ENCODE measurements at regions of chr9 and their contacts with region 1.

Region 1: GRCh38 chr9:130707225-130707976 is 13.8 kb downstream of the EXOSC2 start:
- DNase-seq: peak; percentile 33 to 68
- ATAC-seq: peak; percentile 80 to 85
- H3K4me3 ChIP-seq: no peak overlapping the region
- H3K27ac ChIP-seq: no peak overlapping the region
- H3K4me1 ChIP-seq: peaks cover 11% of the 10 kb centered on the region; the same call in 1 of the 3 replicates
- CTCF ChIP-seq: peak; percentile 95
- EP300 ChIP-seq: no peak
- POLR2A ChIP-seq: no peak
- RAD21 ChIP-seq: peak; percentile 76

Region 2: GRCh38 chr9:130607640-130608420 is 99.6 kb before region 1 on chr9:
- CTCF ChIA-PET with region 1: no interaction called
- POLR2A ChIA-PET with region 1: no interaction called
- DNase-seq: no peak
- ATAC-seq: no peak
- H3K4me3 ChIP-seq: no peak overlapping the region
- H3K27ac ChIP-seq: no peak overlapping the region
- H3K4me1 ChIP-seq: no peaks in the 10 kb centered on the region
- CTCF ChIP-seq: no peak
- EP300 ChIP-seq: no peak
- POLR2A ChIP-seq: no peak
- RAD21 ChIP-seq: no peak

Region 3: DNA sequence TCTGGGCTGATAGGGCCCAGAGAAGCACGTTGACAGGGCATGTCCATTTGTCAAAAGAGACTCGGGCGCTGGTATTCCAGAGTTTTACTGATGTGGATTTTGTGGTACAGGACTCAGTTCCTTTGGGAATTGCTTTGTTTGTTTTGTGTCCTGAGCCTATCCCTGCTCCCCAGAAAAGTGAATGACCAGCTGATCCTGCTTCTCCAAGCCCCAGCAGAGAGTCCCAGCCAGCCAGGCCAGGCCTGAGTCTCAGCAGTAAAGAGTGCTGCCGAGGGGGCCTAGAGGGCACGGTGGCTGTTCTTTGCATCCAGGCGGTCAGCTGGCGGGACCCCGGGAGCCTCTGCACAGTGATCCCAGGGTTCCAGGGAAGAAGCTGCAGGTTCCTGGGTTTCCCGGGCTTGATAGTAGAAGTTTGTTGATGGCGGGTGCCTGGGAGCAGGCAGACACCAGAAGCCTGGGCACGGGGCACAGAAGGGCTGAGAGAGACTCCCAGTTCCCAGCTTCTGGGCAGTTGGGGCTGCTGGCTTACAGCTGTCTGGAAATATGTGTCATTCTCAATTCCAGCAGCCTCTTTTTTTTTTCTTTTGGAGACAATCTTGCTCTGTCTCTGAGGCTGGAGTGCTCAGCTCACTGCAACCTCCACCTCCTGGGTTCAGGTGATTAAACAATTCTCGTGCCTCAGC is 34.3 kb before region 1 on chr9:
- CTCF ChIA-PET with region 1: no interaction called
- POLR2A ChIA-PET with region 1: no interaction called
- DNase-seq: no peak
- ATAC-seq: no peak
- H3K4me3 ChIP-seq: no peak overlapping the region
- H3K27ac ChIP-seq: peak overlapping the region in 1 of 2 experiments; percentile 3; a peak in 1 of 6 replicates
- H3K4me1 ChIP-seq: no peaks in the 10 kb centered on the region
- CTCF ChIP-seq: no peak
- EP300 ChIP-seq: no peak
- POLR2A ChIP-seq: no peak
- RAD21 ChIP-seq: no peak

Region 4: DNA sequence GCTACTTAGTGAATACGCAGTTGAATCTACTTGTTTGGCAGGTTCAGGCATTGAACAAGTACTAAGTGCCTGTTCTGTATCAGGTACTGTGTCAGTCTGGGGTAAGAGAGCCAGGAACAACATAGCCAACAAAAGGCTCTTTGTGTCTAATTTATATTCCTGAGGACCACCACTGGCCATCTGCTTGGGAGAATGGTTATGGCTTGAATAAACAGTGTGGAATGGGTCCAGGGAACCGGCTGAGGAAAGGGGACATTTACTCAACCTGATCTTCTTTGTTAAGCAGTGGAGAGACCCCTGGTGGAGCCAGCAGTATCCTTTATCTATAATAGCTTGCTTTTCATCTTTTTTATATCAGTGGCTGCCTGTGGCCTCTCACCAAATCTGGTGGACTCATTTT is 24.7 kb after region 1 on chr9:
- CTCF ChIA-PET with region 1: interaction called, 21 read pairs
- POLR2A ChIA-PET with region 1: no interaction called
- DNase-seq: peak in 1 of 2 experiments; percentile 40
- ATAC-seq: peak; percentile 66 to 80; a peak in 5 of 6 replicates
- H3K4me3 ChIP-seq: no peak overlapping the region
- H3K27ac ChIP-seq: peak overlapping the region; percentile 41 to 53; a peak in 1 of 6 replicates
- H3K4me1 ChIP-seq: peaks cover 25% of the 10 kb centered on the region
- CTCF ChIP-seq: peak; percentile 36; the same call in 2 of the 3 replicates
- EP300 ChIP-seq: no peak
- POLR2A ChIP-seq: no peak
- RAD21 ChIP-seq: 0 out of 5 replicates have a peak, but pooled peaks of 1 of the 2 experiments have one; percentile 11

Region 5: GRCh38 chr9:130847327-130848217 is 140.2 kb after region 1 on chr9:
- CTCF ChIA-PET with region 1: interaction called, 63 read pairs
- POLR2A ChIA-PET with region 1: interaction called, 3 read pairs
- DNase-seq: peak; percentile 87 to 90
- ATAC-seq: peak; percentile 79 to 81
- H3K4me3 ChIP-seq: peak overlapping the region; percentile 35; the same call in 2 of the 3 replicates
- H3K27ac ChIP-seq: peak overlapping the region; percentile 91 to 93
- H3K4me1 ChIP-seq: peaks cover 72% of the 10 kb centered on the region
- CTCF ChIP-seq: peak; percentile 19; the same call in 1 of the 3 replicates
- EP300 ChIP-seq: peak; percentile 50 to 74; a peak in 3 of 5 replicates
- POLR2A ChIP-seq: no peak
- RAD21 ChIP-seq: 0 out of 5 replicates have a peak, but pooled peaks of 1 of the 2 experiments have one; percentile 6

Region 6: GRCh38 chr9:130857864-130858738 is 150.7 kb after region 1 on chr9:
- CTCF ChIA-PET with region 1: interaction called, 176 read pairs
- POLR2A ChIA-PET with region 1: no interaction called
- DNase-seq: no peak
- ATAC-seq: peak in 1 of 2 experiments; percentile 30; a peak in 3 of 6 replicates
- H3K4me3 ChIP-seq: no peak overlapping the region
- H3K27ac ChIP-seq: no peak overlapping the region; a peak in 1 of 6 replicates
- H3K4me1 ChIP-seq: peaks cover 22% of the 10 kb centered on the region
- CTCF ChIP-seq: no peak
- EP300 ChIP-seq: no peak
- POLR2A ChIP-seq: no peak
- RAD21 ChIP-seq: no peak

Region 7: DNA sequence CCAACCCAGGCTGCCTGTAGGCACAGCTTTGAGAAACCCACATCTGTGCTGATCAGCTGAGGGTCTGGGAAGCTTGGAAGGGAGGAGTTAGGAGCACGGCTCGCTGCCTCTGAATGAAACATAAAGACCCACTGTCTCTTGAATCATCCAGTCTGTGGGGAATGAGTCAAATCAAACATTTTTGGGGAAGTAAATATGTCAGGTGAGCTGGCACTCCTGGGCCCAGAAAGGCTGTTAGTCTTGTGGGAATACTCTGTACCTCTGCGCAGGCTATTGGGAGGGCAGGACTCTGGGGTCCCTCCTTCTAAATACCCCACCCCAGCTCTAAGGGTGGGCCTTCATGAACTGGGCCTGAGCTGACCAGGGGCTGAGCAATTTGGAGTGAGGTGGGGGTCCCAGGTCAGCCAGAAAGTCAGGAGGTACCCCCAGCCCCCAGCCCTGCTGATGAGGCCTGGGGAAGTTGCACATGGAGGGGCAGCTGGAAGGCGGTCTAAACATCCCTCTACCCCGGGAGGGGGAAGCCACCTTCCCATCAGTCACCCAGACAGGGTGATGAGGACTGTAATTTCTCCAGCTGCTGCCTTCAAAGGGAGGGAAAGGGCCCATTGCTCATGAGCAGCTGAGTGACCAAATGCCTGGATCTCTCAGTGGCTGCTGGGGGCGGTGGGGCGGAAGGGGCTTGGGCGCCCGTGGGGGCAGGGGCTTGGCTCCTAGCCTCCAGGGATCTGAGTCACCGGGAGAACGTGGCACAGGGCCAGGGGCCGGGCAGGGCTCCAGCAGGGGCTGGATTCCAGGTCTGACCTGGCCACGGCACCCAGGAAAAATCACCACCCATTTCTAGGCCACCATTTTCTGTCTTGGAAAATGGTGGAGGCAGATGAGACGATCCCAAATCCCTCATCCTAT is 220.8 kb after region 1 on chr9:
- CTCF ChIA-PET with region 1: interaction called, 10 read pairs
- POLR2A ChIA-PET with region 1: no interaction called
- DNase-seq: peak; percentile 81 to 83
- ATAC-seq: peak; percentile 60 to 72
- H3K4me3 ChIP-seq: peak overlapping the region; percentile 18; the same call in 2 of the 3 replicates
- H3K27ac ChIP-seq: peak overlapping the region; percentile 82 to 93
- H3K4me1 ChIP-seq: peaks cover 38% of the 10 kb centered on the region
- CTCF ChIP-seq: no peak
- EP300 ChIP-seq: no peak
- POLR2A ChIP-seq: no peak
- RAD21 ChIP-seq: no peak